ENCODE measurements at regions of chr2 and their contacts with region 1.

Region 1: GRCh38 chr2:169803480-169803879 is 4.8 kb downstream of the SSB start:
- DNase-seq: no peak
- ATAC-seq: no peak
- H3K4me3 ChIP-seq: no peak overlapping the region
- H3K27ac ChIP-seq: no peak overlapping the region
- H3K4me1 ChIP-seq: peaks cover 0 to 6% of the 10 kb centered on the region in 2 experiments; a peak in 2 of 5 replicates
- H3K27me3 ChIP-seq: no peaks in the 10 kb centered on the region
- CTCF ChIP-seq: no peak
- EP300 ChIP-seq: no peak
- POLR2A ChIP-seq: no peak
- RAD21 ChIP-seq: no peak

Region 2: GRCh38 chr2:169815849-169816248 is 12.4 kb after region 1 on chr2:
- CTCF ChIA-PET with region 1: no interaction called
- POLR2A ChIA-PET with region 1: interaction called, 32 read pairs
- in situ Hi-C with region 1: no loop called
- intact Hi-C with region 1: no loop called
- DNase-seq: no peak
- ATAC-seq: peak; percentile 23; the same call in 1 of the 3 replicates
- H3K4me3 ChIP-seq: no peak overlapping the region
- H3K27ac ChIP-seq: no peak overlapping the region
- H3K4me1 ChIP-seq: no peaks in the 10 kb centered on the region; a peak in 1 of 5 replicates
- H3K27me3 ChIP-seq: no peaks in the 10 kb centered on the region
- CTCF ChIP-seq: no peak
- EP300 ChIP-seq: no peak
- POLR2A ChIP-seq: no peak
- RAD21 ChIP-seq: no peak

Measured in K562 (cell line).